Stomach (tissue), 19 donors: ENCODE measurements at regions of chr7 and their contacts with region 1.

Region 1: DNA sequence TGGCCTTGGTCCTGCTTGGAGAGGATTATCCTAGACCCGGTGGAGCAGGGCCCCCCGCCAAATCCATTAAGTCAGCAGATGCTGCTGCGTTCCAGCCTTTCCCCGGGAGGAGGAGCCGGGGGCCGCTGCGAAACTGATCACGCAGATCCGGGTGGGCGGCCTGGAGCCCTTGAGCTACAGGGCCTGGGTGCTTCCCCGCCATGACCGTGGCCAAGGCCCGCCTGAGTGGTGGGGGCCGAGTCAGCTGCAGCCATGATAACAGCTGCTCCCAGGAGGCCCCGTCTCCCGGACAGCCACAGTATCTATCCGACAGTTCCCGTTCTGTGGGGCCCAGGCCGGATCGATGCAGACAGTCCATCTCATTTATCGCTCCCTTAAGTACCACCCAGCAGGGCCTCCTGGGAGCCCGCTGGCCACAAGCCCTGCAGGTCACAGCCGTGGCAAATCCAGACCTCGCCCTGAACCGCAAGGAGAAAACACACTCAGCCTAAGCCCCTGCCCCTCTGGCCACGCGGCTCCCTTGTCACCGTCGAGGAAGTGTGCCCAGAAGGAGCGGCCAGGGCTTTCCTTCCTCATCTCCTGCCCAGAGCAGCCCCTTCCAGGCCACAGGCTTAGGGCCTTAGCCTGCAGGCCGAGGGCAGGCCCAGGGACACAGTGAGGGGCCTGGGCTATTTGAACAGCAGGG is 34.4 kb upstream of the SLC29A4 start:
- DNase-seq: peak in 1 of 2 donors; percentile 94
- H3K4me3 ChIP-seq: no peak overlapping the region
- H3K27ac ChIP-seq: peak overlapping the region in 3 of 5 donors; percentile 25 to 74 (median 56)
- H3K4me1 ChIP-seq: peaks cover 0 to 4% (median 2%) of the 10 kb centered on the region in 4 donors
- H3K27me3 ChIP-seq: no peaks in the 10 kb centered on the region
- CTCF ChIP-seq: no peak
- EP300 ChIP-seq: no peak
- POLR2A ChIP-seq: no peak

Region 2: GRCh38 chr7:5036446-5036845 is 211.9 kb before region 1 on chr7:
- intact Hi-C with region 1: no loop called
- DNase-seq: no peak
- H3K4me3 ChIP-seq: no peak overlapping the region
- H3K27ac ChIP-seq: no peak overlapping the region
- H3K4me1 ChIP-seq: no peaks in the 10 kb centered on the region
- H3K27me3 ChIP-seq: no peaks in the 10 kb centered on the region
- CTCF ChIP-seq: no peak
- EP300 ChIP-seq: no peak
- POLR2A ChIP-seq: no peak

Region 3: GRCh38 chr7:5143935-5144903 is 104.1 kb before region 1 on chr7:
- intact Hi-C with region 1: no loop called
- DNase-seq: peak; percentile 26 to 69
- H3K4me3 ChIP-seq: peak overlapping the region in 1 of 4 donors; percentile 9
- H3K27ac ChIP-seq: no peak overlapping the region
- H3K4me1 ChIP-seq: peaks cover 0 to 4% (median 0%) of the 10 kb centered on the region in 4 donors
- H3K27me3 ChIP-seq: peaks cover 0 to 11% (median 7%) of the 10 kb centered on the region in 3 donors
- CTCF ChIP-seq: no peak
- EP300 ChIP-seq: no peak
- POLR2A ChIP-seq: no peak

Region 4: GRCh38 chr7:5462216-5462615 is 213.9 kb after region 1 on chr7:
- intact Hi-C with region 1: loop called (anchors 10 kb)
- DNase-seq: no peak
- H3K4me3 ChIP-seq: no peak overlapping the region
- H3K27ac ChIP-seq: no peak overlapping the region
- H3K4me1 ChIP-seq: peaks cover 0 to 15% (median 6%) of the 10 kb centered on the region in 4 donors
- H3K27me3 ChIP-seq: no peaks in the 10 kb centered on the region
- CTCF ChIP-seq: no peak
- EP300 ChIP-seq: no peak
- POLR2A ChIP-seq: no peak